ENCODE measurements at regions of chrX and their contacts with region 1.

Region 1: GRCh38 chrX:119753571-119754257 is 4.7 kb upstream of the SOWAHD start:
- DNase-seq: peak; percentile 90
- H3K4me3 Mint-ChIP-seq: no peak overlapping the region
- H3K27ac Mint-ChIP-seq: peak overlapping the region; percentile 99
- H3K4me1 Mint-ChIP-seq: peaks cover 37% of the 10 kb centered on the region
- H3K27me3 Mint-ChIP-seq: no peaks in the 10 kb centered on the region

Region 2: GRCh38 chrX:118345401-118346257 is 1408.1 kb before region 1 on chrX and contains the start of gene WDR44:
- intact Hi-C with region 1: loop called (anchors 5 kb)
- DNase-seq: peak; percentile 97
- H3K4me3 Mint-ChIP-seq: peak within 1 kb of the TSS; percentile 99
- H3K27ac Mint-ChIP-seq: peak within 1 kb of the TSS; percentile 96
- H3K4me1 Mint-ChIP-seq: peaks cover 32% of the 10 kb centered on the region
- H3K27me3 Mint-ChIP-seq: no peaks in the 10 kb centered on the region
- total RNA-seq, gene WDR44: 10.3 and 11.0 TPM in 2 replicates

Region 3: DNA sequence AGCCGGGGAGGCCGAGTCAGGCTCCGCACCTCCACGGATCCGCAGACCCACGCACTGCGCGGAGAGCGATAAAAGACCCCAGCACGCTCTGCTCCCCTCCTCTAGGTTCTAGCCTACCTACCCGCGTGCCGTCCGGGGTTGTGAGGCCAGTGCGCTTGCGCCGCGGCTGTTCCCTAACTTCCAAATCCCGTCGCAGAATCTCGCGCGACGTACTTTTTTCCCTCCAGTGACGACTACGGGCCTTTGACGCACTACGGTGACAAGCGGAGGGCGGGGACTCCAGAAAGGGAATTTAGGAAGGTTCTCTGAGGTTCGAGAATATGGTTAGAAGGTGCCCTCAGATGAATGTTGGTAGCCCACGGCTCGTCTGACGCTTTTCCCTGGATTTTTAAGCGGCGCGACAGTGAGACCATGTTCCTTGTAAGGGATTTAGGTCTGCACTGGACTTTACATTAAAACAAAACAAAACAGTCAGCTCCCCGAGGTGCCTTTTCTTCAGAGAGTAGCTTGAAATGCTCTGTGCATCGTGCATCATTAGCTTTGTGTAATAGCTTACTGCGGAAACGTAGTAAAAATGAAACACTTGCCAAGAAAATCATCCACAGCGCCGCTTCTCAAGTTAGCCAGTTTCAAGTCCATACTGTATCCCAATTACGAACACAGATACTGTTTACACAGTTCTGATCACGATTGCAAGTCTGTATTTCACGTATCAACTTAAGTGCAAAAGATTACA is 147.3 kb before region 1 on chrX and contains the start of gene NKRF:
- intact Hi-C with region 1: loop called (anchors 2 kb)
- DNase-seq: peak; percentile 96
- H3K4me3 Mint-ChIP-seq: peak within 1 kb of the TSS; percentile 99
- H3K27ac Mint-ChIP-seq: peak within 1 kb of the TSS; percentile 95
- H3K4me1 Mint-ChIP-seq: peaks cover 20% of the 10 kb centered on the region
- H3K27me3 Mint-ChIP-seq: no peaks in the 10 kb centered on the region
- total RNA-seq, gene NKRF: 28.0 and 29.8 TPM in 2 replicates

Region 4: DNA sequence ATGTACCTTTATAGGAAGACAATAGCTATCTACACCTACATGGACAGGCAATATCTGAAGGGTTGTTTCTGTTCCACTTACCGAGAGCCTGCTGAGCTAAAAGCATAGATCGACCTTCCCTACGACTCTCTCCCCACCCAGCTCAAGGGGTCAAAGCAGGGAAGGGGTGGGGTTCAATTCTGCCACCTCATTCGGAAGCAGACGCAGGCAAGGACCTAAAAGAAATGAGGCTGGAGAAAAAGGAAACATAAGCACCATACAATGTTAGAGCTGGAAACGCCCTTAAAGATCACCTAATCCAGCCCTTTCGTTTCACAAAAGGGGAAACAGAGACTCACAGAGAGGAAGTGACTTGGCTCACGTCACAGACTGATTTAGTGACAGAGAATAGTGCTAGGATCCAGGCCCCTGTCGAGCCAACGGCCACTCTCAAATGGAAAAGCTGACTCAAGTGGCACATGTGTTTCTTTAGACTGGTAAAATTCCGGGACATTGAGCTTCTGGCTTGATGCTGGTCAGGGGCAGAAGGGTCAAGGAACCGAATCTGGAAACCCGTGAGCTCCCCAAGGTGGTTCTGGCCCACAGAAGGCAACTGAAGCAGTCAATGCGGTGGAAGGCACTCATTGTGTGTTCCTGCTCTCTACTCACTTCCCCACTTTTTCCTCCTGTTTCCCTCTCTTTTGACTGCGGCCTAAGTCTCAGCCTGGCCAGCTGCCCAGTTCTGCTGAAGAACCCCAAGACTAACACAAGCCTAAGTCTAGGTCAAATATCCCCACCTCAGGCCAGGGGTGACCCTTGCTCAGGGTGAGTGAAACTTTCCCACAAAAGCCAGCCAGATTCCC is 68.3 kb before region 1 on chrX:
- intact Hi-C with region 1: loop called (anchors 2 kb)
- DNase-seq: peak; percentile 85
- H3K4me3 Mint-ChIP-seq: peak overlapping the region; percentile 96
- H3K27ac Mint-ChIP-seq: peak overlapping the region; percentile 99
- H3K4me1 Mint-ChIP-seq: peaks cover 51% of the 10 kb centered on the region
- H3K27me3 Mint-ChIP-seq: no peaks in the 10 kb centered on the region

Region 5: DNA sequence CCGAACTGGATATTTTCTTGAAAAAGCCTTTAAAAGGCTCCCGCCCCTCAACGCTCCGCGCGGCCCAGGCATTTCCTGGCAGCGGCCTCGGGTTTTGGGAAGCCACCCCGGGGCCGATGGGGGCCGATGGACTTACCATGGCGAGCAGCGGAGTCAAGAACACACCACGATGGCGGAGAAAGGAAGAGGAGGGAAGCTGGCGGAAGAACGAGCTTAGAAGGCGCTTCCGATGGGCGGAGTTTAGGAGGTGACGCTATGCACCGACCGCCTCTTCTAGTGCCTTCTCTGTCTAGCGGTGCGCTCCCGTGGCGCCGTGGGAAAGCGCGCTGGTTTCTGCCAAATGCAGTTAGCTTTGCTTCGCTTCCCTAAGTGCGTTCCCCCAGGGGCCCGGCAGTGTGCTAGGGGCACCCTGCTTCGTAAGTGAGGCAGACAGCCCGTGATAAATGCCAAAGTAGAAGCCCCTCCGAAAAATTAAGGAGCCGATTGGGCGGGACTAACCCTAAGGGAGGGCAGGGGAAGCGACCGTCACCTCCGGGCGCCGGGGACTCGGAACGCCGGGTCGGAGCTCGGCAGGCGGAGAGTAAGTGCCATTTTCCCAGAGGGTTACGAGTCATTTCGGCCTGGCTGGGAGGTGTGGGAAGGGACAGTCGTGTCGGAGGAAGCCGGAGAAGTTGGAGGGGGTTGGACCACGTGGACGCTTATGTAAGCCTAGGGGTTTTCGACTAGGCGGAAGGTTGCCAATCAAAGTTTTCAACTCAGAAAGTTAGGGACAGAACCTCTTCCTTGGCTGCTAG is 37.9 kb after region 1 on chrX and contains the start of gene RPL39:
- intact Hi-C with region 1: loop called (anchors 5 kb)
- DNase-seq: peak; percentile 94
- H3K4me3 Mint-ChIP-seq: peak within 1 kb of the TSS; percentile 93
- H3K27ac Mint-ChIP-seq: peak within 1 kb of the TSS; percentile 97
- H3K4me1 Mint-ChIP-seq: peaks cover 14% of the 10 kb centered on the region
- H3K27me3 Mint-ChIP-seq: no peaks in the 10 kb centered on the region
- total RNA-seq, gene RPL39: 2,109 and 2,135 TPM in 2 replicates

Region 6: GRCh38 chrX:119871599-119872395 is 118.1 kb after region 1 on chrX and contains the starts of genes NDUFA1 and RNF113A:
- intact Hi-C with region 1: loop called (anchors 2 kb)
- DNase-seq: peak; percentile 96
- H3K4me3 Mint-ChIP-seq: peak within 1 kb of the TSS; percentile 98
- H3K27ac Mint-ChIP-seq: peak within 1 kb of the TSS; percentile 99
- H3K4me1 Mint-ChIP-seq: peaks cover 5% of the 10 kb centered on the region
- H3K27me3 Mint-ChIP-seq: no peaks in the 10 kb centered on the region
- total RNA-seq, gene NDUFA1: 75.1 and 79.0 TPM in 2 replicates
- total RNA-seq, gene RNF113A: 25.2 and 26.7 TPM in 2 replicates

Measured in activated CD4-positive, alpha-beta T cell treated with anti-CD3 and anti-CD28 coated beads, Interleukin-2, amount 10 ng/mL, durations not matched to agents 24 days and 14 days (primary cell).